Activated CD8-positive, alpha-beta T cell treated with anti-CD3 and anti-CD28 coated beads for 36 hours (primary cell): ENCODE measurements at regions of chr20 and their contacts with region 1.

Region 1: DNA sequence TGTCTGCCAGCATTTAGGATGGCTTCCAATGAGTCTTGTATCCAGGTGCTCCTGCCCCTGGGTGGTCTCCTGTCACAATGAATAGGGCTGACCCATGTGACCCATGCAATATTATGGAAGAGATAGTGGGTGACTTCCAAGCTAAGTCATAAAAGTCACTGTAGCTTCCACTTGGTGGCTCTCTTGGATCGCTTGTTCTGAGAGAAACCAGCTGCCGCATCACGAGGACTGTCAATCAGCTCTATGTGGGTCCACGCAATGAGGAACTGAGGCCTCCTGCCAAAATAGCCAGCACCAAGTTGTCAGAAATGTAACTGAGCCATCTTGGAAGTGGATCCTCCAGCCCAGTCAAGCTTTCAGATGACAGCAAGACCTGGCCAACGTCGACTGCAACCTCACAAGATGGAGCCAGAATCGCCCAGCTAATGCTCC is 14.9 kb upstream of the MATN4 start:
- DNase-seq: peak; percentile 43
- ATAC-seq: no peak
- H3K4me3 Mint-ChIP-seq: no peak overlapping the region
- H3K27ac Mint-ChIP-seq: no peak overlapping the region
- H3K4me1 Mint-ChIP-seq: peaks cover 25% of the 10 kb centered on the region
- H3K27me3 Mint-ChIP-seq: no peaks in the 10 kb centered on the region
- CTCF ChIP-seq: no peak

Region 2: GRCh38 chr20:45283548-45284057 is 39.4 kb before region 1 on chr20:
- CTCF ChIA-PET with region 1: no interaction called
- POLR2A ChIA-PET with region 1: no interaction called
- intact Hi-C with region 1: no loop called
- DNase-seq: no peak
- ATAC-seq: no peak
- H3K4me3 Mint-ChIP-seq: no peak overlapping the region
- H3K27ac Mint-ChIP-seq: no peak overlapping the region
- H3K4me1 Mint-ChIP-seq: no peaks in the 10 kb centered on the region
- H3K27me3 Mint-ChIP-seq: peaks cover 14% of the 10 kb centered on the region
- CTCF ChIP-seq: no peak

Region 3: GRCh38 chr20:45300961-45301360 is 22.0 kb before region 1 on chr20:
- CTCF ChIA-PET with region 1: interaction called, 40 read pairs
- POLR2A ChIA-PET with region 1: no interaction called
- intact Hi-C with region 1: no loop called
- DNase-seq: peak; percentile 78
- ATAC-seq: peak; percentile 81
- H3K4me3 Mint-ChIP-seq: no peak overlapping the region
- H3K27ac Mint-ChIP-seq: no peak overlapping the region
- H3K4me1 Mint-ChIP-seq: peaks cover 24% of the 10 kb centered on the region
- H3K27me3 Mint-ChIP-seq: peaks cover 33% of the 10 kb centered on the region
- CTCF ChIP-seq: peak; percentile 47

Region 4: DNA sequence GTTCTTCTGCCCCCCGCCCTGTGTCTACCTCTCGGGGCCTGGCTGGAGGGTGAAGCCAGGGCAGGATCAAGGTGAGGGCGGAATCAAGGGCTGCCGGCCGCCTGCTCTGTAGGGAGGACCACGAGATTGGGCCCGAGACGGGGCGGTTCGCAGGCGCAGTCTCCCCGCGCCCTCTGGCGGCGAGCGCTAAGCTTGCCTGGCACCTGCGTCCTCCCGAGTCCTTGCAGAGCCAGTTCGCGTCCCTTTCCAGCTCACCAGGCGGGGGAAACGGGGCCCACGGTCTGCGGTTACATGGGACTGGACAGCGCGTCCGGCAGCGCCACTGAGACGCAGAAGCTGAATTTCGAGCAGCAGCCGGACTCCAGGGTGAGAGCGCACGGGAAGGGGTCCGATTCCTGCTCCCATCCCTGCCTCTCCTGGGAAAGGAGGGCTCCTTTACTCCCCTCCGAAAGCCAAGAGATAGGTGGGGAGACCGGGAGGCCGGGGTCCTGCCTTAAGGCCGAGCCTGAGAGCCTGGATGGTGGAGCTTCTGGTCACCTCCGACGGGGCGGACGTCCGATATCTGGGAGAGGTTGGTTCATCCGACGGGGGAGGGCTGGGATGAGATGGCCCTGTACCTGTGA is 11.3 kb before region 1 on chr20:
- CTCF ChIA-PET with region 1: interaction called, 12 read pairs
- POLR2A ChIA-PET with region 1: no interaction called
- intact Hi-C with region 1: no loop called
- DNase-seq: peak; percentile 74
- ATAC-seq: peak; percentile 80
- H3K4me3 Mint-ChIP-seq: no peak overlapping the region
- H3K27ac Mint-ChIP-seq: no peak overlapping the region
- H3K4me1 Mint-ChIP-seq: peaks cover 5% of the 10 kb centered on the region
- H3K27me3 Mint-ChIP-seq: peaks cover 57% of the 10 kb centered on the region
- CTCF ChIP-seq: peak; percentile 93

Region 5: GRCh38 chr20:45450097-45450818 is 127.3 kb after region 1 on chr20:
- CTCF ChIA-PET with region 1: interaction called, 25 read pairs
- POLR2A ChIA-PET with region 1: no interaction called
- intact Hi-C with region 1: no loop called
- DNase-seq: peak; percentile 28
- ATAC-seq: peak; percentile 66
- H3K4me3 Mint-ChIP-seq: no peak overlapping the region
- H3K27ac Mint-ChIP-seq: no peak overlapping the region
- H3K4me1 Mint-ChIP-seq: peaks cover 2% of the 10 kb centered on the region
- H3K27me3 Mint-ChIP-seq: peaks cover 2% of the 10 kb centered on the region
- CTCF ChIP-seq: peak; percentile 79

Region 6: GRCh38 chr20:45538209-45538799 is 215.3 kb after region 1 on chr20:
- CTCF ChIA-PET with region 1: no interaction called
- POLR2A ChIA-PET with region 1: no interaction called
- intact Hi-C with region 1: no loop called
- DNase-seq: no peak
- ATAC-seq: no peak
- H3K4me3 Mint-ChIP-seq: no peak overlapping the region
- H3K27ac Mint-ChIP-seq: no peak overlapping the region
- H3K4me1 Mint-ChIP-seq: no peaks in the 10 kb centered on the region
- H3K27me3 Mint-ChIP-seq: peaks cover 28% of the 10 kb centered on the region
- CTCF ChIP-seq: no peak